Breast epithelium (tissue), 4 donors: ENCODE measurements at regions of chr17 and their contacts with region 1.

Region 1: GRCh38 chr17:5912991-5913531 is 157.1 kb upstream of the WSCD1 start:
- DNase-seq: no peak
- H3K4me3 ChIP-seq: no peak overlapping the region
- H3K27ac ChIP-seq: no peak overlapping the region
- H3K4me1 ChIP-seq: no peaks in the 10 kb centered on the region
- H3K27me3 ChIP-seq: no peaks in the 10 kb centered on the region
- CTCF ChIP-seq: no peak
- POLR2A ChIP-seq: no peak

Region 2: DNA sequence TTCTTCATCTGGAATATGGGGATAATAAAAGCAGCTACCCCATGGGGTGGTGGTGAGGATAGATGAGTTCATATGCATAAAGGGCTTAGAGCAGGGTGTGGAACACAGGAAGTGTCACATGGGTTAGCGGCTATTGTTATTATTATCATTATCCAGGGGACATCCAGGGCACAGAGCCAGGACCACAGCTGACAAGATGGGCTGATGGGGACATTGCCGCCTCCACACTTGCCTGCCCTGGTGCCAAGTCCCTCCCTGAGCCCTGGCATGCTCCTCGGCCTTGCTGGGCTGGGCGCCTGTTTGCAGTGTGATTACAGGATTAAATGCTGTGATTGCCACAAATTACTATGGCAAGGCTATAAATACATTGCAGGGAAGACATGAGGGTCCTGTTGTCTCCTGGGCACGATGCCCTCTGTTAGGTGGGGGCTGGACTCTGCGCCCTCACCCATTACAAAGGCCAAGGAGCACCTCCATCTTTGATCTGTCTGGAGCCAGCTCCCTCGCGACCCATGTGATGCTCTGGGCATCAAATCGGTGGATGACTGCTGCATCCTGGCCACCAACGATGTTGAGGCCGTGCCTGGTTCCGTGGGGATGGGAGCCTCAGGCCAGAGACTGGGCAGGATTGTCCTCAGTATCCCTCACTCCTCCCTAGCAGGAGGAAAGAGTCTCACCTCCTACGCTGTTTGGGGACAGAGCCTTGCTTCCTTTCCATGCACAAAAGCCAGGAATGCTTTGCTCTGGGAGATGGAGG is 574.4 kb after region 1 on chr17:
- intact Hi-C with region 1: loop called (anchors 5 kb)
- DNase-seq: no peak
- H3K4me3 ChIP-seq: no peak overlapping the region
- H3K27ac ChIP-seq: no peak overlapping the region
- H3K4me1 ChIP-seq: no peaks in the 10 kb centered on the region
- H3K27me3 ChIP-seq: no peaks in the 10 kb centered on the region
- CTCF ChIP-seq: no peak
- POLR2A ChIP-seq: no peak